ENCODE measurements at regions of chr5 and their contacts with region 1.

Region 1: DNA sequence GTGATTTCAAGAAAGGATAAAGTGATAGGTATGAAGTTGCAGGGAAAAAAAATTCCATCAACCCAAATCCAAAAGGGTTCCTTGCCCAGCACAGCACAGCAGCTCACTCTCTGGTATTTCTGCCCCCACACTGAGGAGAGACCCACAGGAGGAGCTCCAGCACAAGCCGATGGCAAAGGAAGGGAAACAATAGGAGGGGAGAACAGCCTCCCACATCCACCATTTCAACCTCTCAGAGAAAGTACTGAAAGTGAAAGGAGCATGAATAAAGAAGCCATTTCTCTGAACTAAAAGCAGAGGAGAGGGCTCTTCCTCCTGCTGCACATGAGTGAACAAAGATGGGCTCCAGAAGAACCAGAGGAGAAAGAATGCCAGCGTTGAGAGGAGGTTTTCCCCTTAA is 54.9 kb upstream of the ZSWIM6 start:
- DNase-seq: peak; percentile 37 to 45
- H3K4me3 ChIP-seq: no peak overlapping the region
- H3K4me3 Mint-ChIP-seq: no peak overlapping the region
- H3K27ac Mint-ChIP-seq: peak overlapping the region; percentile 40
- H3K4me1 ChIP-seq: peaks cover 10% of the 10 kb centered on the region
- H3K4me1 Mint-ChIP-seq: peaks cover 29% of the 10 kb centered on the region
- H3K27me3 ChIP-seq: no peaks in the 10 kb centered on the region
- H3K27me3 Mint-ChIP-seq: no peaks in the 10 kb centered on the region
- CTCF ChIP-seq: peak in 1 of 2 experiments; percentile 60

Region 2: GRCh38 chr5:60668686-60669304 is 608.4 kb before region 1 on chr5:
- CTCF ChIA-PET with region 1: no interaction called
- POLR2A ChIA-PET with region 1: no interaction called
- intact Hi-C with region 1: no loop called
- DNase-seq: peak in 1 of 2 experiments; percentile 38
- H3K4me3 ChIP-seq: no peak overlapping the region
- H3K4me3 Mint-ChIP-seq: no peak overlapping the region
- H3K27ac Mint-ChIP-seq: no peak overlapping the region
- H3K4me1 ChIP-seq: peaks cover 39% of the 10 kb centered on the region
- H3K4me1 Mint-ChIP-seq: peaks cover 33% of the 10 kb centered on the region
- H3K27me3 ChIP-seq: no peaks in the 10 kb centered on the region
- H3K27me3 Mint-ChIP-seq: no peaks in the 10 kb centered on the region
- CTCF ChIP-seq: peak; percentile 45 to 50

Region 3: GRCh38 chr5:61306511-61307131 is 29.4 kb after region 1 on chr5:
- CTCF ChIA-PET with region 1: interaction called, 3 read pairs
- POLR2A ChIA-PET with region 1: no interaction called
- intact Hi-C with region 1: loop called (anchors 1 kb)
- DNase-seq: peak; percentile 69 to 72
- H3K4me3 ChIP-seq: no peak overlapping the region
- H3K4me3 Mint-ChIP-seq: peak overlapping the region; percentile 8
- H3K27ac Mint-ChIP-seq: peak overlapping the region; percentile 30
- H3K4me1 ChIP-seq: peaks cover 74% of the 10 kb centered on the region
- H3K4me1 Mint-ChIP-seq: peaks cover 56% of the 10 kb centered on the region
- H3K27me3 ChIP-seq: no peaks in the 10 kb centered on the region
- H3K27me3 Mint-ChIP-seq: no peaks in the 10 kb centered on the region
- CTCF ChIP-seq: no peak

Region 4: DNA sequence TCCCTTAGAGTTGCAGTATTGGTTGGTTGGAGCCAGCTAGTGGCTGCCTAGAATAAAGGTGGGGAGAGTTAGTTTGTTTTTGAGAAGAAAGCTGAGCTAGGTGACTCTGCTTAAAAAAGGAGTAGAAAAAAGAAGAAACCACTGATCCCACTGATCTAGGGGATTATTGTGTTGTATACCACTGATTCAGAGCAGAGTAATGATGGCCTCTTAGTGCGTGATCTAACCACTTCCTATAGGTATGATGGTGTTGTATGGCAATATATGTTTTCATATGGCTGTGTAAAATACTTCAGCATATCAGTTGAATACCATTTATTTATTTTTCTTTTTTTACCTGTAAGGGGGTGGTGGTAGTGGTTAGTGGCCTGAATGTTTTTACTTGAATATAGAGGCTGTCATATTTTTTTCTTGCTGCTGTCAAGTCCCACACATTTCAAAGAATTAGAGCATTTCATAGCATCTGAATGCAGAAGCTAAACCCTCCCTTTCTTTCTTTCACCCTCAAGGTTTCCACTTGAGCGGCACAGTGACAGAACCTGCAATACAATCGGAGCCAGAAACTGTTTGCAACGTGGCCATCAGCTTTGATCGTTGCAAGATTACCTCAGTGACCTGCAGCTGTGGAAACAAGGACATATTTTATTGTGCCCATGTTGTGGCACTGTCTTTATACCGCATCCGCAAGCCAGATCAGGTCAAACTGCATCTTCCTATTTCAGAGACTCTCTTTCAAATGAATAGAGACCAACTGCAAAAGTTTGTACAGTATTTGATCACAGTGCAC is 195.2 kb after region 1 on chr5:
- CTCF ChIA-PET with region 1: no interaction called
- POLR2A ChIA-PET with region 1: no interaction called
- intact Hi-C with region 1: no loop called
- DNase-seq: no peak
- H3K4me3 ChIP-seq: no peak overlapping the region
- H3K4me3 Mint-ChIP-seq: no peak overlapping the region
- H3K27ac Mint-ChIP-seq: no peak overlapping the region
- H3K4me1 ChIP-seq: no peaks in the 10 kb centered on the region
- H3K4me1 Mint-ChIP-seq: no peaks in the 10 kb centered on the region
- H3K27me3 ChIP-seq: no peaks in the 10 kb centered on the region
- H3K27me3 Mint-ChIP-seq: no peaks in the 10 kb centered on the region
- CTCF ChIP-seq: no peak

Region 5: DNA sequence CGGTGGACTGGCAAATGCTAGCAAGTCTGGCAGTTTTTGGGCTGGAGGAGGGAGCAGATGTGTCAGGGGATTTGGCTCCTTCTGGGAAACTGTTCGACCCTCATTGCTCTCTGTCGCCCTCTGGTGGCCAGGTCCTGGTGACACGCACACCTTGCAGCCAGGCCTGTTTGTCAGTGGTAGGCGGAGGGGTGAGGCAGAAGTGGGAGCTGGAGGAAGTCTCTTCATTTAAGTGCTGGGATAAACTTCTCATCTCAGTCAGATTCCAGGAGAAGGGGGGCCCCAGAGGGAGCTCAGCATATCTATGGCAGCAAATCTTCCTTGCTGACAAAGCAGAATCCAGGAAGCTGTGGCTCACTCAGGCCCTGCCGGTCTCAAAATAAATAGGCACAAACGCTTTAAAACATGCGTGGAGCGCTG is 381.4 kb after region 1 on chr5:
- CTCF ChIA-PET with region 1: no interaction called
- POLR2A ChIA-PET with region 1: no interaction called
- intact Hi-C with region 1: loop called (anchors 10 kb)
- DNase-seq: peak; percentile 78 to 87
- H3K4me3 ChIP-seq: no peak overlapping the region
- H3K4me3 Mint-ChIP-seq: no peak overlapping the region
- H3K27ac Mint-ChIP-seq: no peak overlapping the region
- H3K4me1 ChIP-seq: no peaks in the 10 kb centered on the region
- H3K4me1 Mint-ChIP-seq: no peaks in the 10 kb centered on the region
- H3K27me3 ChIP-seq: no peaks in the 10 kb centered on the region
- H3K27me3 Mint-ChIP-seq: peaks cover 16% of the 10 kb centered on the region
- CTCF ChIP-seq: peak; percentile 96